Activated naive CD4-positive, alpha-beta T cell treated with anti-CD3 and anti-CD28 coated beads for 36 hours (primary cell): ENCODE measurements at regions of chr1 and their contacts with region 1.

Region 1: GRCh38 chr1:244047621-244048471 is 3.2 kb upstream of the ZBTB18 start:
- DNase-seq: peak; percentile 98
- H3K4me3 Mint-ChIP-seq: peak overlapping the region; percentile 94
- H3K27ac Mint-ChIP-seq: peak overlapping the region; percentile 96
- H3K4me1 Mint-ChIP-seq: peaks cover 45% of the 10 kb centered on the region
- H3K27me3 Mint-ChIP-seq: no peaks in the 10 kb centered on the region

Region 2: DNA sequence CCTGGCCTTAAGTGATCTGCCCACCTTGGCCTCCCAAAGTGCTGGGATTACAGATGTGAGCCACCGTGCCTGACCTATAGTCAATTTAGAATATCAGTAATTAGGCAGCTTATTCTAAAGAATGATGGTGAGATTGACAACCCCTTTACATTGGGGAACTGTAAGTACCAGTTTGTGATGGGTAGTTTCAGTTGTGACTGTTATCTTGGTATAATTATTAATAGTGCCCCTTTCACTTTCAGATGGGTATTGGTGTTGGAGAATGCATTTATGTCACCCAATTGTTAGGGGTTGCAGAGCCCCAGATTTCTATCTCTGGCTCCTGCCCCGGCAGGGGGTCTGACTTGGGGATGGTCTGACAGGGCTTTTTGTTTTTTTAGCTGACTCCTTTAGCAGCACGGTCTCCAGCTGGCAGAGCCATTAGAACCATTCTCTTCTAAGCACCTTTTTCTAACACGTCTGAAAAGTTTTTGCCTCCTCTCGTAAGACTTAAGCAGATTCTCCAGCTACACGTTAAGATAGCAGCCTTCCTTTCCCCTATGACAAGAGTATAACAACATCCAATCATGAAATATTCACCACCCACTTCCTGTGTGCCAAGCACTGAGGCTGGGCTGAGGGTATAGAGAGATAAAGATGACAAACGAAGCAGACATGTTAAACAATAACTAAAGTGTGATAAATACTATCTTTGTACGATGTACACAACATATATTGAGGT is 634.3 kb before region 1 on chr1:
- CTCF ChIA-PET with region 1: no interaction called
- intact Hi-C with region 1: loop called (anchors 1 kb)
- DNase-seq: peak; percentile 8
- H3K4me3 Mint-ChIP-seq: no peak overlapping the region
- H3K27ac Mint-ChIP-seq: no peak overlapping the region
- H3K4me1 Mint-ChIP-seq: peaks cover 23% of the 10 kb centered on the region
- H3K27me3 Mint-ChIP-seq: no peaks in the 10 kb centered on the region

Region 3: DNA sequence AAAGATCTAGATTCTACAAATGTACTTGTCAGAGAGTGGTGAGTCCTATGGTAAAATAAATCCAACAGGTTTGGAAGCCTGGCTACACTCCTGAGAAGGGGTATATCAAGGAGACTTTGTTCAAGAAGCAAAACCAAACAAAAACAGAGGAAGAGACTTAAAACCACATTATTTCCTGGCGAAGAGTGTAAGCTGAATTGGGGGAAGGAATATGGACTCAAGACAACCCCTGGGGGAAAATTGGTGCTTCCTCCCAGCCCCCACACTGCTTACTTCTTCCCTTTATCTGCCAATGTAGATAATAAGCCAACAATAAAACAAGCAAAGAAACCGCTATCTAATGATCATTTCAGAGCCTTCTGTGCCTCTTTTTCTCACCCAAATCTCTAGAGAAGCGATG is 45.1 kb before region 1 on chr1:
- CTCF ChIA-PET with region 1: no interaction called
- intact Hi-C with region 1: loop called (anchors 2 kb)
- DNase-seq: no peak
- H3K4me3 Mint-ChIP-seq: no peak overlapping the region
- H3K27ac Mint-ChIP-seq: no peak overlapping the region
- H3K4me1 Mint-ChIP-seq: peaks cover 20% of the 10 kb centered on the region
- H3K27me3 Mint-ChIP-seq: no peaks in the 10 kb centered on the region

Region 4: DNA sequence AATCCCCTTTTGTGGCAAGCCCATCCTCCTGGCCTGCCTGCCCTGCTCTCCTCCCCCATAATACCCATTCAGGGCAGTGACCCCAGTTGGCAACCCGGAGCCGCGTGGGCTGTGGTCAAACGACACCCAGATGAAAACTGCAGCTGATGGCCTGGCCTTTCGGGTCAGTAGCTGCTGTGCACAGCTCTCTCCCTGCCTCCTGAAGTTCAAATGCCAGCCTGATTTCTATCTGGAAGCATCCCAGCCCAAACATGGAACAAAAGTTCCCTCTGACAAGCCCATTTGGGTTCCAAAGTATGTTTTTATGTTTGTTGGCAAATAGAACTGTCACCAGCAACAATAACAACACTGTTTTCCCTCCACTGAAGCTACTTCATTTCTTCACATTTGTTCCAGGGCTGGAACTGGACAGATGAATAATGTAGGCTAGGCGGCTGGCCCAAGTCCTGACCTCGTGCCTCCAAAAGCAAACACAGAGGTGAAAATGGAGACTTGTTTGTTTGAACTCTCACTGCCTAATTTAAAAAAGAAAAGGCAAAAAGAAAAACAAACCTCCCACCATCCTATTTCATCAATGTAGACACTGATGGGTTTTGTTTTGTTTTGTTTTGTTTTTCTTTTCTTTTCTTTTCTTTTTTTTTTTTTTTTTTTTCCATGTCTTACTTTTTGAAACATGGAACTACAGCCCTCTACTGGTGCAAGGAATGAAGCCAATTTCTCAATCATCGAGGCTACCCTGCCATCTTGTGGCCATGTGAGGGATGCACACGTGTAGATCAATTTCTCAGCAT is 224.8 kb after region 1 on chr1:
- CTCF ChIA-PET with region 1: no interaction called
- intact Hi-C with region 1: loop called (anchors 1 kb)
- DNase-seq: peak; percentile 84
- H3K4me3 Mint-ChIP-seq: no peak overlapping the region
- H3K27ac Mint-ChIP-seq: no peak overlapping the region
- H3K4me1 Mint-ChIP-seq: no peaks in the 10 kb centered on the region
- H3K27me3 Mint-ChIP-seq: no peaks in the 10 kb centered on the region

Region 5: GRCh38 chr1:244451951-244452795 is 404.3 kb after region 1 on chr1:
- CTCF ChIA-PET with region 1: no interaction called
- intact Hi-C with region 1: loop called (anchors 1 kb)
- DNase-seq: peak; percentile 99
- H3K4me3 Mint-ChIP-seq: peak overlapping the region; percentile 97
- H3K27ac Mint-ChIP-seq: peak overlapping the region; percentile 86
- H3K4me1 Mint-ChIP-seq: peaks cover 37% of the 10 kb centered on the region
- H3K27me3 Mint-ChIP-seq: no peaks in the 10 kb centered on the region

Region 6: GRCh38 chr1:244835276-244836134 is 787.7 kb after region 1 on chr1 and contains the start of gene COX20:
- CTCF ChIA-PET with region 1: no interaction called
- intact Hi-C with region 1: loop called (anchors 1 kb)
- DNase-seq: peak; percentile 85
- H3K4me3 Mint-ChIP-seq: peak within 1 kb of the TSS; percentile 94
- H3K27ac Mint-ChIP-seq: peak within 1 kb of the TSS; percentile 99
- H3K4me1 Mint-ChIP-seq: peaks cover 38% of the 10 kb centered on the region
- H3K27me3 Mint-ChIP-seq: no peaks in the 10 kb centered on the region
- total RNA-seq, gene COX20: 21.4 to 24.2 TPM